ENCODE measurements at regions of chr5 and their contacts with region 1.

Region 1: GRCh38 chr5:132103332-132103951 is 29.9 kb downstream of the CSF2 start:
- DNase-seq: peak; percentile 81
- H3K4me3 Mint-ChIP-seq: peak overlapping the region; percentile 47
- H3K27ac Mint-ChIP-seq: peak overlapping the region; percentile 99
- H3K4me1 Mint-ChIP-seq: peaks cover 79% of the 10 kb centered on the region
- H3K27me3 Mint-ChIP-seq: no peaks in the 10 kb centered on the region

Region 2: DNA sequence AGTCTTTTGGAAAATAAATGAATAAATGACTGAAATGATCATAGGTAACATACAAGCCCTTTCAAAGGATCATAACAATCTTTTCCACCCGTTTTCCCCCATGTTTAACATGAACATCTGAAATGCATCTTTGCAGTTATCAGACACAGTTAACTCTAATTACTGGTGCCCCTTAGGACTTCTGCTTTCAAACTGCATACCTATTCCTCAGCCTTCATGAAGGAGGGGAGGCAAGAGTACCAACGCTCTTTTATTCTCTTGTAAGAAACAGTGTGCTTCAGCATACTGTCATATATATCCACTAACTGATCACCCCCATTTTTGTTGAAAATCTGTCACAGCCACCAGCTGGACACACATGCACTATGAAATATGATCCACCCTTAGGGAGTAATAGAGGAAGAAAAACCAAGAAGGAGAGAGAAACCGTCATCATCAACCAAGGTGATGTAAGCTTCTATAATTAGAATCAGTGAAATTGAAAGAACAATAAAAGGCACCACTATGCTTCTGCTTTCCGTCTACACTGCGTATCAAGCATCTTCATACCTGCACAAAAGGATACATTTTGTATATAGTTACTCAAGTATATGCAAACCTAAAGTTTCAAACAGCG is 567.1 kb before region 1 on chr5:
- intact Hi-C with region 1: no loop called
- DNase-seq: no peak
- H3K4me3 Mint-ChIP-seq: peak overlapping the region; percentile 45
- H3K27ac Mint-ChIP-seq: peak overlapping the region; percentile 67
- H3K4me1 Mint-ChIP-seq: peaks cover 58% of the 10 kb centered on the region
- H3K27me3 Mint-ChIP-seq: no peaks in the 10 kb centered on the region

Region 3: GRCh38 chr5:131926168-131926567 is 177.3 kb before region 1 on chr5:
- intact Hi-C with region 1: no loop called
- DNase-seq: no peak
- H3K4me3 Mint-ChIP-seq: no peak overlapping the region
- H3K27ac Mint-ChIP-seq: no peak overlapping the region
- H3K4me1 Mint-ChIP-seq: no peaks in the 10 kb centered on the region
- H3K27me3 Mint-ChIP-seq: peaks cover 6% of the 10 kb centered on the region

Region 4: DNA sequence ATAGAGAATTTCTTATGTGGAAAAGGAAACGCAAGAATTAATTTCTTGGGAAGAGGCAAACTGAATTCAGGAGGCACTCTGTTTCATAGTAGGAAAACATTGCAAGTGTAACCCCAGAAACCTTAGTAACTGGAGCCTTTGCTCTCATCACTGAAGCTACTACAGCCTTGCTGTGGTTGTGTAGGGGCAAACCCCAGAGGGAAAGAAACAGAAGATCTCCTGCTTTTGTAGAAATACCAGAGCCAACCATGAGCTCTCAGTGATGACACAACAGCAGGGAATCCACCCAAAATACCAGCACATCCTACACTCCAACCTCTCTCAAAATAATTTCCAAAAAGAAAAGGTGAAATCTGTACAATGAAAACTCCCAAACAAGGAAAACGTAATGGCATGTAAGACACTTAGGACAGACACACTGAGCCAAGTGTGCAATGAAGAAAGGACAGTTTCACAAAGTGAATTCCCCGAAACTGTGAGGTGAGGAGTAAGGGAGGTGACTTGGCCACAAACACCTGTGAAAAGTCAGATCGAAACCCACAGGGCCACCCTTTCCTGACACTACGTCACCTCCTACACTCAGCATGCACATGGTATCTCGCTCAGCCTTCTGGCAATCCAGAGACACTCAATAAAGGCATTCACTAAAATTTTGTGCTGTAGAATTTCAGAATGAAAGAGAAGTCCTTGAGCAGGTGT is 83.4 kb before region 1 on chr5:
- intact Hi-C with region 1: loop called (anchors 1 kb)
- DNase-seq: peak; percentile 82
- H3K4me3 Mint-ChIP-seq: peak overlapping the region; percentile 34
- H3K27ac Mint-ChIP-seq: peak overlapping the region; percentile 92
- H3K4me1 Mint-ChIP-seq: peaks cover 48% of the 10 kb centered on the region
- H3K27me3 Mint-ChIP-seq: peaks cover 24% of the 10 kb centered on the region

Region 5: DNA sequence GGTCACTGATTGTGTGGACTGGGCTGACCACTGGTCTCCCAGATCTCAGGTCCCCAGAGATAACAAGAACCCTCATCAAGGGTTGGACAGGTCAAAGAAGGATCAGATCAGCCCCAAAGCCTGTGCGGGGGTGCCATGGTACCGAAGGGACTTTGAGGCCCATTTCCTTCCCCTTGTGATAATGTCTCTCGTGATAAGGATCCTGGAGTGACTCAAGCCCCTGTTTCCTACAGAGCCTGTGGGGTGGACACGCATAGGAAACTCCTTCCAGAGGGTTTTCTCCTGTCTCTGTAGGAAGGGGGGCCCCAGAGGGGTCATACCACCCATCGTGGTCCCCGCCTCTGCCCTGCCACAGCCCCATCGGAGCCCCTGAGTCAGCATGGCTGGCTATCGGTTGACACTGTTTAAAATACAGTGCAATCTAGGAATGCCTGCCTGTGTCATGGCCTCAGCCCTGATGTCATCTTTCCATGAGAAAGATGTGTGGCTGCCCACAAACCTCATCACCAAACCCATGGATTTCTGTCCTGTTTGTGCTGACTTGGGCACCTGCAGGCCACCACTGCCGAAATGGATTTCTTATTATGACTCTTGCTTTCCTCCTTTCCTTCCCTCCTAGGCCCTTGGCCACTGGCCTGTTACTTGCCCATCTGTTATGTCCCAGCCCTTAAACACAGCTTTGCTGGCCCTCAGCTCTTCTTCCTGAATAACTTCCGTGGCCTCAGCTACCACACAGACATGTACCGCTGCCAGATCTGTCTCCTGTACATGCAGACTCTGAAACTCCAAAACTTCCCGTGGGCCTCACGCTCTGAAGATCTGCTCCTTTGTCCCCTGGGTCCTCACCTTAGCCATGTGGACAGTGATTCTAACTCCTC is 32.7 kb before region 1 on chr5:
- intact Hi-C with region 1: loop called (anchors 1 kb)
- DNase-seq: no peak
- H3K4me3 Mint-ChIP-seq: peak overlapping the region; percentile 54
- H3K27ac Mint-ChIP-seq: peak overlapping the region; percentile 89
- H3K4me1 Mint-ChIP-seq: peaks cover 68% of the 10 kb centered on the region
- H3K27me3 Mint-ChIP-seq: no peaks in the 10 kb centered on the region

Region 6: DNA sequence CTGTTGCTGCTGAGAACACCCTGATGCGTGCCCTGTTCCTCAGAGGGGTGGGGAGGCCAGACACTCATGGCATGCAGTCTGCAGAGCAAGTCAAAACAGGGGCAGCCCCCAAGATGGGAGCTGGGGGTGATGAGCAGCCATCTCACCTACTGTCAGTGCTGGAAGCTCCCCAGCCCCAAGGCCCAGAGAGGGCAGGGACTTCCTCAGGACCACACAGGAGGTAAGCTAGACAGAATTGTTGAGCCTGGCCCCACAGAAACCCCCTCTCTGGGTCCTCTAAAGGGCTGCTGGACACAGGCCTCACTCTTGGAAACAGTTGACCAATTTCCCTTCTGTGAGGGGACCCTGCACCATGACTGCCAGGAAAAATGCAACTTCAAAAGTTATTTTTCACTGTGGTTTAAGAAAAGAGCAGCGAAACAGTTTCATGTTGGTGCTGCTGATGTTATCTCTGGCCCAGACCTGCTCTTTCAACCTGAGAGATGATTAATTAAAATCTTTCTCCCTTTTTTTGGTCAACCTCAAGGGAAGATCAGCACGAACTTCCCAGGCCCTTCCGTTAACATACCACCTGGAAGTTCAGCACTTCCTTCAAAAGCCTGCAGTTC is 20.3 kb before region 1 on chr5:
- intact Hi-C with region 1: loop called (anchors 1 kb)
- DNase-seq: no peak
- H3K4me3 Mint-ChIP-seq: no peak overlapping the region
- H3K27ac Mint-ChIP-seq: peak overlapping the region; percentile 76
- H3K4me1 Mint-ChIP-seq: peaks cover 74% of the 10 kb centered on the region
- H3K27me3 Mint-ChIP-seq: no peaks in the 10 kb centered on the region

Region 7: GRCh38 chr5:132114150-132115121 is 11.0 kb after region 1 on chr5:
- intact Hi-C with region 1: loop called (anchors 1 kb)
- DNase-seq: no peak
- H3K4me3 Mint-ChIP-seq: peak overlapping the region; percentile 0
- H3K27ac Mint-ChIP-seq: peak overlapping the region; percentile 49
- H3K4me1 Mint-ChIP-seq: peaks cover 58% of the 10 kb centered on the region
- H3K27me3 Mint-ChIP-seq: no peaks in the 10 kb centered on the region

Region 8: DNA sequence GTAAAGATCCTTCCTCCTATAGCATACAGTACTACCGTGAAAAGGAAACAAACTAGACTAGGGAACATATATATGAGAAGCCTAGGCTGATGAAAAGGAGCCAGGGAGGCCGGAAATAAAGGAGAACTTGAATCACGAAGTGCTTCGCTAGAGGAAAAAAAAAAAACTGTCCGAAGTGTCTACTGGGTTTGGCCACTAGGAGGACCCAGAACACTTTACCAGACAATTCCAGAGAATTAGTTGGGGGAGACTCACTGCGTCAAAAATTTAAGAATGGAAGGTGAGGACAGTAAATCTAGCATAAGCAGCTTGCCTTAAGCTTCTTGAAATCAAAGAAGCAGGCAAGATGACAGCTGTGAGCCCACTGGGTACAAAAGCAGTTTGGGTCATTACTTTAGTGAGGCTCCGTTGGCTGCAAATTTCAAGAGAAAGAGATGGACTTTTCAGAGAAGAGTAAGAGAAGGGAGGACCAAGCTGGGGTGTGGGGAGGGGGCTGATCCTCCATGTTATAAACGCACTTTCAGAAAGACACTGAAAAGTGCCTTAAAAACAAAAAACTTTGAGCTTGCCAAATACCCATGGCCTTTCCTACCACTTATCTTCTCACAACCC is 76.8 kb after region 1 on chr5:
- intact Hi-C with region 1: loop called (anchors 1 kb)
- DNase-seq: no peak
- H3K4me3 Mint-ChIP-seq: peak overlapping the region; percentile 19
- H3K27ac Mint-ChIP-seq: peak overlapping the region; percentile 85
- H3K4me1 Mint-ChIP-seq: peaks cover 44% of the 10 kb centered on the region
- H3K27me3 Mint-ChIP-seq: no peaks in the 10 kb centered on the region

Region 9: DNA sequence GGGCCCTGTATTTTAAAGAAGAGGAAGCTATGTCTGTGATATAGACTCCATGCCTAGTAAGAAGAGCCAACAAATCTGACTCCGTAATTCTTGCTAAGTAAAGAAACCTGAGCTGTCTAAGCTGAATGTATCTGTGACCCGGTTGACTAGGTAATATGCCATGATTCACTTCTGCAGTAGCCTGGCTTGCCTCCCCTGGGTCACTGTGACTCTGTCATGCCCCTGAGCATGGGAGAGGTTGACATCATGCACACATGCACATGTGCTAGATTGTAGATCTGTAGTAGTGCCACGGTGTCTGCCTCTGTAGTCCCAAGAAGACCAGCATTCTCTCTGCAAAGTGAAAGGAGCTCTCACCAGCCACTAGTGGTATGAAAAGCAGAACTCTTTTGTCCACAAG is 275.1 kb after region 1 on chr5:
- intact Hi-C with region 1: no loop called
- DNase-seq: no peak
- H3K4me3 Mint-ChIP-seq: no peak overlapping the region
- H3K27ac Mint-ChIP-seq: no peak overlapping the region
- H3K4me1 Mint-ChIP-seq: no peaks in the 10 kb centered on the region
- H3K27me3 Mint-ChIP-seq: no peaks in the 10 kb centered on the region

Region 10: GRCh38 chr5:132753135-132753987 is 649.9 kb after region 1 on chr5:
- intact Hi-C with region 1: loop called (anchors 10 kb)
- DNase-seq: no peak
- H3K4me3 Mint-ChIP-seq: no peak overlapping the region
- H3K27ac Mint-ChIP-seq: peak overlapping the region; percentile 5
- H3K4me1 Mint-ChIP-seq: peaks cover 42% of the 10 kb centered on the region
- H3K27me3 Mint-ChIP-seq: peaks cover 4% of the 10 kb centered on the region